ENCODE measurements at regions of chr11 and their contacts with region 1.

Region 1: GRCh38 chr11:125568970-125569914 is at the start of gene EI24:
- DNase-seq: peak; percentile 50
- H3K4me3 ChIP-seq: peak within 1 kb of the TSS; percentile 81
- H3K27me3 ChIP-seq: no peaks in the 10 kb centered on the region
- CTCF ChIP-seq: peak; percentile 82
- polyA plus RNA-seq, gene EI24: 72.1 and 114 TPM in 2 replicates

Region 2: DNA sequence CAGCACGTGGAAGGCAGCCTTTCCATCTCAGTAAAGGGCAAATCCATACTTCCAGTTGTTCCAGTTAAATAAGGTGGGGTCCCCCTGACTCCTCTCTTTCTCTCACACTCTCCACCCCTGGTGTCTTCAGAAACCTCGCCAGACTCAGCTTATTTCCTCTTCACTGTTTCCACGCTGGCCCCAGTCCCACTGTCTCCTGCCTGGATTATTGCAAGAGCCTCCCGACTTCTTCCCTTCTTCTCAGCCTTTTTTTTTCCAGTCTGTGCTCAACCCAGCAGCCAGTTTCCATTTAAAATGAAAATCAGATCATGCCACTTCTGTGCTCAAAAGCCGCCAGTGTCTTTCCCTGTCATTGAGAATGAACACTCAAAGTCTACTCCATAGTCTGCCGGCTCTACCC is 273.3 kb before region 1 on chr11:
- CTCF ChIA-PET with region 1: no interaction called
- POLR2A ChIA-PET with region 1: no interaction called
- DNase-seq: no peak
- H3K4me3 ChIP-seq: no peak overlapping the region
- H3K27me3 ChIP-seq: peaks cover 9% of the 10 kb centered on the region
- CTCF ChIP-seq: no peak

Region 3: GRCh38 chr11:125579811-125580210 is 10.6 kb after region 1 on chr11:
- CTCF ChIA-PET with region 1: interaction called, 12 read pairs
- POLR2A ChIA-PET with region 1: interaction called, 3 read pairs
- DNase-seq: no peak
- H3K4me3 ChIP-seq: no peak overlapping the region
- H3K27me3 ChIP-seq: no peaks in the 10 kb centered on the region
- CTCF ChIP-seq: no peak

Region 4: GRCh38 chr11:125750629-125751028 is 181.4 kb after region 1 on chr11:
- CTCF ChIA-PET with region 1: no interaction called
- POLR2A ChIA-PET with region 1: no interaction called
- DNase-seq: no peak
- H3K4me3 ChIP-seq: no peak overlapping the region
- H3K27me3 ChIP-seq: peaks cover under 1% of the 10 kb centered on the region; the same call in 1 of the 2 replicates
- CTCF ChIP-seq: no peak